ENCODE measurements at regions of chr10 and their contacts with region 1.

Region 1: GRCh38 chr10:62038609-62039190 is 137.2 kb downstream of the ARID5B start:
- DNase-seq: peak; percentile 87
- ATAC-seq: peak; percentile 60
- H3K4me3 Mint-ChIP-seq: peak overlapping the region; percentile 45
- H3K27ac Mint-ChIP-seq: peak overlapping the region; percentile 92
- H3K4me1 Mint-ChIP-seq: peaks cover 87% of the 10 kb centered on the region
- H3K27me3 Mint-ChIP-seq: no peaks in the 10 kb centered on the region

Region 2: GRCh38 chr10:61896854-61897661 is 141.6 kb before region 1 on chr10:
- CTCF ChIA-PET with region 1: interaction called, 23 read pairs
- POLR2A ChIA-PET with region 1: interaction called, 3 read pairs
- intact Hi-C with region 1: loop called in 1 of 2 experiments (anchors 2 kb)
- DNase-seq: peak; percentile 70
- ATAC-seq: peak; percentile 79
- H3K4me3 Mint-ChIP-seq: peak overlapping the region; percentile 94
- H3K27ac Mint-ChIP-seq: peak overlapping the region; percentile 93
- H3K4me1 Mint-ChIP-seq: peaks cover 39% of the 10 kb centered on the region
- H3K27me3 Mint-ChIP-seq: no peaks in the 10 kb centered on the region

Region 3: DNA sequence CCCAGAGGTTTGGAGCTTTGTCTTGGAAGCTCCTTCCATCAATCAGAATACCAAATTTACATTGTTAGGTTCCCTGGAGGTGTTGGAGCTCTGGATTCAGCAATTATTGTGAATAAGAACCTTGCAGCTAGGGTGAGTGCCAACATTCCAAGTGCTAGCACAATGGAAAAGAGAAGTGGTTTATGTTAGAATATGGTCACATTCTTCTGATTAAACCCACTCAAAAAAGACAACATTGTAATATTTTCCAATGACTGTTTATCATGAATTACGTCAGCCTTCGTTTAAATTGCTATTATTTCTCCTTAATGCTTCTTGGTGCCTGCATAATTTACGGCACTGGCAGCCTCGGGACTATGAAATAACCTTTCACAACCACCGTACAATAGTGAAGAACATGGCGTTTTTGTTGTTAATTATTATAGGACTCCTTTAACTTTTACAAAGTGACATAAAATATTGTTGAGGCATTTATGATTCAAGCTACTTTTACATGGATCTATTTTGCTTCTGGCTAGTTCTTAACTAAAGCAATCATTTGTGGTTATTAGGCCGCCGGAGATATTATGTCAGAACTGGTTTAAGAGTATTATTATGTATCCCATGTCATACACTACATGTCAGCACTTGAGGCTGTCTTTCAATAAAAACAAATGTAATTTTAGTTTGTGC is 19.6 kb before region 1 on chr10:
- CTCF ChIA-PET with region 1: interaction called, 113 read pairs
- POLR2A ChIA-PET with region 1: interaction called, 4 read pairs
- intact Hi-C with region 1: no loop called
- DNase-seq: no peak
- ATAC-seq: no peak
- H3K4me3 Mint-ChIP-seq: peak overlapping the region; percentile 11
- H3K27ac Mint-ChIP-seq: peak overlapping the region; percentile 100
- H3K4me1 Mint-ChIP-seq: peaks cover 88% of the 10 kb centered on the region
- H3K27me3 Mint-ChIP-seq: no peaks in the 10 kb centered on the region

Region 4: GRCh38 chr10:62025901-62026879 is 12.5 kb before region 1 on chr10:
- CTCF ChIA-PET with region 1: interaction called, 113 read pairs
- POLR2A ChIA-PET with region 1: interaction called, 4 read pairs
- intact Hi-C with region 1: loop called in 1 of 2 experiments (anchors 2 kb)
- DNase-seq: no peak
- ATAC-seq: no peak
- H3K4me3 Mint-ChIP-seq: no peak overlapping the region
- H3K27ac Mint-ChIP-seq: peak overlapping the region; percentile 66
- H3K4me1 Mint-ChIP-seq: peaks cover 92% of the 10 kb centered on the region
- H3K27me3 Mint-ChIP-seq: no peaks in the 10 kb centered on the region

Region 5: DNA sequence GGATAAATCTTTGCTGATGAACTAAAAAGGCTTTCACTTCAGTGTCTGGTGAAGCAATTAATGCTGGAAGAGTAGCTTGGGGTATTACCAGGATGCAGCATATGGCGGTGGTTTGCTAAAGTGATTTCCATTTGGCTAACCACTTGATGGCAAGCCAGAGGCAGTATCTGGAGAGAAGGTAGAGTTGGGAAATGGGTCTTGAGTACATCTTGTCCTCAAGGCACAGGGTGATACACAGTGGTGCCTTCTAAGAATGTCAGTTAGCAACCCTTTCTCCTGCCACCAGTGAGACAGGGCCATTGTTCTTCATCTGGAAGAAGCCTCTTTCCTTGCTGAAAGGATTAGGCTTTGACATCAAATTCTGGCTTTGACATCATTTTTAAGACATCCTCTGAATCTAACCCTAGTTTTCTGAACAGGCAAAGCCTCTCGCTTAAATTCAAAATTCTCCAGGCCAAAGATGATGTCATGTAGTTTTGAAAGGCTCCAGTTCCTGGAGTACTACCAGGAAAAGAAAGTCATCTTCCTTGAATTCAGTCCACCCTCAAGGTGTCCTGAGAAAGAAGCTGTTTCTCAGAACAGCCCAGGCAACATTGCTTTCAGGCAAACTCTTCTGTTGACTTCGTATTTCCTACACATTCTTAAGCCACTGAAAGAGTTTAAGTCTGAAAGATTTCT is 25.2 kb after region 1 on chr10:
- CTCF ChIA-PET with region 1: interaction called, 17 read pairs
- POLR2A ChIA-PET with region 1: interaction called, 4 read pairs
- intact Hi-C with region 1: no loop called
- DNase-seq: no peak
- ATAC-seq: no peak
- H3K4me3 Mint-ChIP-seq: no peak overlapping the region
- H3K27ac Mint-ChIP-seq: peak overlapping the region; percentile 83
- H3K4me1 Mint-ChIP-seq: peaks cover 86% of the 10 kb centered on the region
- H3K27me3 Mint-ChIP-seq: no peaks in the 10 kb centered on the region

Measured in activated CD4-positive, alpha-beta T cell treated with anti-CD3 and anti-CD28 coated beads for 36 hours (primary cell).